Caco-2 (cell line): ENCODE measurements at regions of chr15 and their contacts with region 1.

Region 1: GRCh38 chr15:94105760-94106159 is 125.6 kb upstream of the MCTP2 start:
- DNase-seq: peak; percentile 83 to 87
- H3K4me3 ChIP-seq: no peak overlapping the region
- H3K4me3 Mint-ChIP-seq: peak overlapping the region; percentile 56
- H3K27ac Mint-ChIP-seq: peak overlapping the region; percentile 89
- H3K4me1 ChIP-seq: peaks cover 29% of the 10 kb centered on the region
- H3K4me1 Mint-ChIP-seq: peaks cover 35% of the 10 kb centered on the region
- H3K27me3 ChIP-seq: no peaks in the 10 kb centered on the region
- H3K27me3 Mint-ChIP-seq: no peaks in the 10 kb centered on the region
- CTCF ChIP-seq: no peak

Region 2: GRCh38 chr15:93954985-93955748 is 150.6 kb before region 1 on chr15:
- CTCF ChIA-PET with region 1: no interaction called
- POLR2A ChIA-PET with region 1: no interaction called
- intact Hi-C with region 1: loop called (anchors 1 kb)
- DNase-seq: peak; percentile 84 to 85
- H3K4me3 ChIP-seq: no peak overlapping the region
- H3K4me3 Mint-ChIP-seq: peak overlapping the region; percentile 64
- H3K27ac Mint-ChIP-seq: peak overlapping the region; percentile 50
- H3K4me1 ChIP-seq: peaks cover 17% of the 10 kb centered on the region
- H3K4me1 Mint-ChIP-seq: peaks cover 21% of the 10 kb centered on the region
- H3K27me3 ChIP-seq: no peaks in the 10 kb centered on the region
- H3K27me3 Mint-ChIP-seq: no peaks in the 10 kb centered on the region
- CTCF ChIP-seq: no peak

Region 3: GRCh38 chr15:93997084-93997918 is 108.5 kb before region 1 on chr15:
- CTCF ChIA-PET with region 1: no interaction called
- POLR2A ChIA-PET with region 1: no interaction called
- intact Hi-C with region 1: loop called (anchors 1 kb)
- DNase-seq: peak; percentile 41 to 65
- H3K4me3 ChIP-seq: no peak overlapping the region
- H3K4me3 Mint-ChIP-seq: no peak overlapping the region
- H3K27ac Mint-ChIP-seq: no peak overlapping the region
- H3K4me1 ChIP-seq: peaks cover 19% of the 10 kb centered on the region
- H3K4me1 Mint-ChIP-seq: peaks cover 15% of the 10 kb centered on the region
- H3K27me3 ChIP-seq: no peaks in the 10 kb centered on the region
- H3K27me3 Mint-ChIP-seq: no peaks in the 10 kb centered on the region
- CTCF ChIP-seq: peak; percentile 73 to 85

Region 4: DNA sequence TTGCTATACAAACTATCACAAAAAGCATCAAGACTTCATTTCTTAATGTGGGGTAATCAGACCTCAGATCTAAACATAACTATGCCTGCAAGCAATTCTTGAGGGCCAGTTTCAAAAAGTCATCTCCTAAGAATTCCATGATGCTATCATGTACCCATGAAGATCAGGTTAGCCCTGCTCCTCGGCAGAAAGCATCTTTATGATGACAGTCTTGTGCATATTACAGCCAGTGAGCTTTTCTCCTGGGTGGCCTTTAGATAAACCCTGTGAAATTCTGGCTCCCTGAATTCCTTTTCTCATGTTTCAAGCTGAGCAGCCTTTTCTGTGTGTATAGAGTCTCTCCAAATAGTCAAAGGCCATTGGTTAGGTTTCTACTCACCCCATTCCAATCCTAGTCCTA is 76.3 kb before region 1 on chr15:
- CTCF ChIA-PET with region 1: no interaction called
- POLR2A ChIA-PET with region 1: no interaction called
- intact Hi-C with region 1: loop called (anchors 1 kb)
- DNase-seq: peak; percentile 48 to 63
- H3K4me3 ChIP-seq: no peak overlapping the region
- H3K4me3 Mint-ChIP-seq: peak overlapping the region; percentile 6
- H3K27ac Mint-ChIP-seq: no peak overlapping the region
- H3K4me1 ChIP-seq: peaks cover 39% of the 10 kb centered on the region
- H3K4me1 Mint-ChIP-seq: peaks cover 24% of the 10 kb centered on the region
- H3K27me3 ChIP-seq: no peaks in the 10 kb centered on the region
- H3K27me3 Mint-ChIP-seq: no peaks in the 10 kb centered on the region
- CTCF ChIP-seq: no peak

Region 5: DNA sequence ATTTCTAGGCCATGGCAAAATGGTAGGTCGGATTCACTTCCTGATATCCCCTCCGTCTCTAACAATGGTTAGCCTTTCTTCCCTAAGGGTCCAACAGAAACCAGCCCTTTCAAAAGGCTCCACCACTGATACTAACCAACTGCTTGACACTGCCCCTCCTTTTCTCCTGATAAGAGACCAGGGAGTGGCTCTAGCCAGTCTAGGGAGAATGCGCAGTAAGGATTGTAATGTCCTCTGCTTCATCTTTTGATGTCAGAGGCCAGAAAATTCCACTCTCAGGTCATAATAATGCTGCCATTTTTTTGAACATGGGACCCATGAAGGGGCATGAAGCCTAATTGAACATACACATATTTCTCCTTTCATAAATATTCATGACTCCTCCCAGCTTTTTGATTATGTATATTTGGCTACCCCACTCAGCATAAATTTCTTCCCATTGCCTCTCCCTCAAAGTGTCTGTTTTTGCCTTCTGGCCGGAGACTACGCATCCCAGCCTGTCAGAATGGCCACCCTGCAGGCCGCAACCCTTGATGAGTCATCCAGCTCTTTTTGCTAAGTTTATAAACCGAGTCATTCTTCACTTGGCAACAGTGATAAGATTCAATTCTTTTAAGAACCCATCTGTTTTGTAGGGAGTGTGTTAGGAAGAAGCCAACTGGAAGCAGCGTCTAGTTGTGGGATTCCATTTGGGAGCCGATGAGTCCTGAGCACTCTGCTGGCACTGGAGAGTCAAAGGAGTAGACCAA is 63.4 kb before region 1 on chr15:
- CTCF ChIA-PET with region 1: no interaction called
- POLR2A ChIA-PET with region 1: no interaction called
- intact Hi-C with region 1: loop called (anchors 1 kb)
- DNase-seq: peak; percentile 42 to 59
- H3K4me3 ChIP-seq: no peak overlapping the region
- H3K4me3 Mint-ChIP-seq: peak overlapping the region; percentile 12
- H3K27ac Mint-ChIP-seq: peak overlapping the region; percentile 90
- H3K4me1 ChIP-seq: peaks cover 16% of the 10 kb centered on the region
- H3K4me1 Mint-ChIP-seq: peaks cover 18% of the 10 kb centered on the region
- H3K27me3 ChIP-seq: no peaks in the 10 kb centered on the region
- H3K27me3 Mint-ChIP-seq: no peaks in the 10 kb centered on the region
- CTCF ChIP-seq: no peak

Region 6: GRCh38 chr15:94075349-94075748 is 30.4 kb before region 1 on chr15:
- CTCF ChIA-PET with region 1: no interaction called
- POLR2A ChIA-PET with region 1: no interaction called
- intact Hi-C with region 1: loop called (anchors 5 kb)
- DNase-seq: no peak
- H3K4me3 ChIP-seq: no peak overlapping the region
- H3K4me3 Mint-ChIP-seq: no peak overlapping the region
- H3K27ac Mint-ChIP-seq: no peak overlapping the region
- H3K4me1 ChIP-seq: no peaks in the 10 kb centered on the region
- H3K4me1 Mint-ChIP-seq: peaks cover 11% of the 10 kb centered on the region
- H3K27me3 ChIP-seq: no peaks in the 10 kb centered on the region
- H3K27me3 Mint-ChIP-seq: no peaks in the 10 kb centered on the region
- CTCF ChIP-seq: no peak

Region 7: DNA sequence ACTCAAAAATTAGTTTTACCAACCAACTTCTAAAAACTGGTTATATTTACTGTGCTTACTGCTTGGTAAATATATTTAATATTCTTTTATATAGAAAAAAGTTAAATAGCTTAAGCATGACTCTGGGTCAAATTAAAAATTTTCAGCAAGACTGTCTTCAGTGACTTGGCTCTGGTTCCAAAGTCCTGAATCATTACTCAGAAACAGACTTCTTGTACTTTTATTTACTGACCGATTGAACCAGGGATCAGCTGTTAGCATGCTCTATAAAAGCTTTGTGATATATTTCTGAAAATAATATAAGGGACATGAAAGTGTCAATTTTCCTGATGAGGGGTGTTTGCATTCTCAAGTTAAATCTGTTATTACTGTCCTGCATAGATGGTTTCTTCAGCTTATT is 289.9 kb after region 1 on chr15:
- CTCF ChIA-PET with region 1: no interaction called
- POLR2A ChIA-PET with region 1: no interaction called
- intact Hi-C with region 1: no loop called
- DNase-seq: no peak
- H3K4me3 ChIP-seq: no peak overlapping the region
- H3K4me3 Mint-ChIP-seq: no peak overlapping the region
- H3K27ac Mint-ChIP-seq: no peak overlapping the region
- H3K4me1 ChIP-seq: no peaks in the 10 kb centered on the region
- H3K4me1 Mint-ChIP-seq: no peaks in the 10 kb centered on the region
- H3K27me3 ChIP-seq: no peaks in the 10 kb centered on the region
- H3K27me3 Mint-ChIP-seq: peaks cover 2% of the 10 kb centered on the region
- CTCF ChIP-seq: no peak